WTC11 (cell line): ENCODE measurements at regions of chr10 and their contacts with region 1.

Region 1: GRCh38 chr10:117216611-117217195 is 19.4 kb downstream of the KCNK18 start:
- DNase-seq: peak; percentile 83
- ATAC-seq: peak; percentile 52
- H3K4me3 Mint-ChIP-seq: peak overlapping the region; percentile 76
- H3K27ac Mint-ChIP-seq: no peak overlapping the region
- H3K4me1 Mint-ChIP-seq: peaks cover 17% of the 10 kb centered on the region
- H3K27me3 Mint-ChIP-seq: peaks cover 72% of the 10 kb centered on the region
- CTCF ChIP-seq: peak; percentile 99

Region 2: GRCh38 chr10:117186832-117187615 is 29.7 kb before region 1 on chr10:
- CTCF ChIA-PET with region 1: interaction called, 12 read pairs
- POLR2A ChIA-PET with region 1: no interaction called
- DNase-seq: no peak
- ATAC-seq: peak; percentile 69
- H3K4me3 Mint-ChIP-seq: no peak overlapping the region
- H3K27ac Mint-ChIP-seq: no peak overlapping the region
- H3K4me1 Mint-ChIP-seq: peaks cover 5% of the 10 kb centered on the region
- H3K27me3 Mint-ChIP-seq: peaks cover 25% of the 10 kb centered on the region
- CTCF ChIP-seq: no peak

Region 3: DNA sequence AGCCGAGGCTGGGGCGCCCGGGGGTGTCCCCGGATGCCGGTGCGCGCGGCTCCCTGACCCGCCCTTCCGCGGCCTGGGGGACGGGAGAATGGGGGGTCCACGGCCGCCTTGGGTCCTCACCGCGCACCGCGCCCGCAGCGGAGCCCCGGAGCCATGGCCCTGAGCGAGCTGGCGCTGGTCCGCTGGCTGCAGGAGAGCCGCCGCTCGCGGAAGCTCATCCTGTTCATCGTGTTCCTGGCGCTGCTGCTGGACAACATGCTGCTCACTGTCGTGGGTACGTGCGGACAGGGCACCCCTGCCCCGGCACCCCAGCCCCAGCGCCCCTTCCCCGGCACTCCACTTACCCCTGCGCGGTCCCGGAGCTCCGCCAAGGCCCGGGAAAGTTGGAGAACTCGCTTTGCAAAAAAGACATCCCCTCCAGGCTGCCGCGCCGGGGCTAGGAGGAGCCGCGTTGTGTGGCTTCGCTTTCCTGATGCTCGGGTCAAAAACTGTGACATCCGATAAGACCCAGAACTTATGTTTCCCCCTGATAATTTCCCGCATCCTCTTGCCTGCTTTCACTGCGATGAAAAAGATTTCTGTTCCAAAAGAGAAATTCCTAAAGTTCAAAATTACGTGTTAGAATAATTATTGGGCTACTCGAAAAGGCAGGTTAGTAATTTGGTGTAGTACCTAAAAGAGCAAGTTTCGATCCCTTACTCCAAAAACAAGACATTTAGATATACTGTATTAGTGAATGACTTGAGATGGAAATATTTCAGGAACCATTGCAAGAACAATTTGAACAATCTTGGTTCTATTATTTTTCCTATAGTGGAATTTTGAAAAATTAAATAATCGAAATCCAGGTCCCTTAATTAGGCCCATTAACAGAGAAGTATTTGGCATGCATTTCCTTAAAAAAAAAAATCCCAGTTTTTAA is 25.1 kb after region 1 on chr10:
- CTCF ChIA-PET with region 1: interaction called, 56 read pairs
- POLR2A ChIA-PET with region 1: no interaction called
- DNase-seq: peak; percentile 47
- ATAC-seq: peak; percentile 58
- H3K4me3 Mint-ChIP-seq: peak overlapping the region; percentile 68
- H3K27ac Mint-ChIP-seq: no peak overlapping the region
- H3K4me1 Mint-ChIP-seq: peaks cover 7% of the 10 kb centered on the region
- H3K27me3 Mint-ChIP-seq: peaks cover 35% of the 10 kb centered on the region
- CTCF ChIP-seq: no peak

Region 4: DNA sequence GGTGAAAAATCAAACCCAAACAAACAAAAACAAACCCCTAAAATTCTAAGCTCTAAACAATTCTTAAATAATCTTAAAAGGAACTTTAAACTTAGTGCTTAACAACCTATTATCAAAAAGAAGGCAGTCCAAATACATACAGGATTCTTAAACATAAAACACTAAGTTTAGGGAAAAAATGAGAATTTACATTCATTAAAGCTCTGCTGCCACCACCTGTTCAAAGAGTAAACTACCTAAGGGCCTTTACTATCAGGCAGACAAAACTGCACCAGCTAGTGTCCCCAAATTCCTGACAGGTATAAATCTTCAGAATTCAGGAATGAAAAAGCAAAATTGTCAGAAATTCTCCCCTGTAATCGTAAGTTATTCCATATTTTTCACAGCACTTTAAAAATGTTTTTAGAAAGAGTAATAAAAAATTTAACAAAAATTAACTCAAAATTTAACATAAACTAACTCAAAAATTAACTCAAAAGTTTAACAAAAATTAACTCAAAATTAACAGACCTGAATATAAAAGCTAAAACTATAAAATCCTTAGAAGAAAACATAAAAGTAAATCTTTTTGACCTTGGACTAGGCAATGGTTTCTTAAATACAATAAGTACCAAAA is 103.5 kb after region 1 on chr10:
- CTCF ChIA-PET with region 1: interaction called, 119 read pairs
- POLR2A ChIA-PET with region 1: interaction called, 3 read pairs
- DNase-seq: no peak
- ATAC-seq: peak; percentile 69
- H3K4me3 Mint-ChIP-seq: no peak overlapping the region
- H3K27ac Mint-ChIP-seq: no peak overlapping the region
- H3K4me1 Mint-ChIP-seq: peaks cover 34% of the 10 kb centered on the region
- H3K27me3 Mint-ChIP-seq: no peaks in the 10 kb centered on the region
- CTCF ChIP-seq: 0 out of 2 replicates have a peak, but pooled peaks have one; percentile 29

Region 5: DNA sequence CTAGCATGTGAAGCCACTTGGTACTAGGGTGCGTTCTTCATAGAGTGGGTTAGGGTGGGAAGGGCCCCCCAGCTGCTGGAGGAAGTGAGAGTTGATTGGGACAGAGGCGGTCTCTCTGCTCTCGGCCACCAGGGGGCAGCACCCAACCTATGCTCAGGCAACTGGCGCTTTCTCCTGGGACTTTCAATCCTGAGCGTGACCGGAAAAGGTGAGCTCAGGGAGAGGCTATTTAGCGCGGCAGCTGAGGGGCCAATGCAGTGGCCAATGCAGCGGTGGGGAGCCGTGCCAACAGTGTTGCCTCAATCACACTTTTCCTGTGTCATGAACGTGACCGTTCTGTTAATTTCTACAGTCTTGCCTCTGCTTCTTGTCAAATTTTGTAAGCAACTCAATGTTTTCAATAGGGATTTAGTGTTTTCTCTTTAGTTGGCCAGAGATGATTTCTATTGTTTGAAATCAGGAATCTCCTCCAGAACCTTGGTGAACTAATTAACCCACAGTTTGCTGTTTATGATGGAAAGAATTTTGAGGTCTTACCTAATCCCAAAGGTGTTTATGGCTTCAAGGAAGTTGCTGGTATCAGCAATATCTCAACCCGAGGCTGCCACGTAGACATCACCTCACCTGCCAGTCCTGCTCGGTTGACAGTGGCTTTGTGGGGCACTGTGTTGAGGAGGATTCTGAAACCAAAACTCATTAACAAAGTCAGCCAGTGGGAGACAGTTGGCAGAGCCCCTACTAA is 226.4 kb after region 1 on chr10:
- CTCF ChIA-PET with region 1: interaction called, 72 read pairs
- POLR2A ChIA-PET with region 1: interaction called, 3 read pairs
- DNase-seq: peak; percentile 91
- ATAC-seq: peak; percentile 96
- H3K4me3 Mint-ChIP-seq: no peak overlapping the region
- H3K27ac Mint-ChIP-seq: no peak overlapping the region
- H3K4me1 Mint-ChIP-seq: no peaks in the 10 kb centered on the region; the same call in 1 of the 2 replicates
- H3K27me3 Mint-ChIP-seq: peaks cover 30% of the 10 kb centered on the region
- CTCF ChIP-seq: peak; percentile 98

Region 6: DNA sequence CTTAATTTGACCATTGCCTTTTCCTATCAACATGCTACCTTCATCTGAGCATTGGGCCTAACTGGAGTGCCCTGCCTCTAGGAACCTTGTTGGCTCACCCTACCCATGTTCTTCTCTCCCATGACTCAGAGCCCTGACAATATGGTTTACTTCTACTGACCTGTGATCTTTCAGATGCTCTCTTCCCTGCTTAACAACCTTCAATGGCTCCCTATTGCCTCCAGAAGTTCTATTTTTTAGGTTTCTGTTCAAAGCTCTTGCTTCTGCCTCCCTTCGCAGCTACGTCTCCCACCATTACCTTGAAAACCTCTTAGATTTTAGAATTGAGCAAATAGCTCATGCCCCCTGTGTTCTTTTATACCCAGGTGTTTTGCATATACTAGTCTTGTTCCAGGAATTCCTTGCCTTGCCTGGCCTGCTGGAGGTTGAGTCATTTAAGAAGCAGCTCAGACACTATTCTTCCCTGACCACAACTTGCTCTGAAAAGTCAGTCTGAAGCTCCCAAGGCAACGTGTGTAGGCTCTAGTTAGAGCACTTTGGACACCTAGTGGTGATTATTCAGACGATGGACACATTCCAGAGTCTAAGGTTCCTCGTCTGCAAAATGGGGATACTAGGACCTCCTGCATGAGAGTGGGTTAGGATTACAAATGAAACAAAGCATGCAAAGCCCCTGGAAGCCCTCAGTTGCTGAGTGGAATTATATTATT is 261.4 kb after region 1 on chr10:
- CTCF ChIA-PET with region 1: interaction called, 14 read pairs
- POLR2A ChIA-PET with region 1: no interaction called
- DNase-seq: no peak
- ATAC-seq: no peak
- H3K4me3 Mint-ChIP-seq: no peak overlapping the region
- H3K27ac Mint-ChIP-seq: no peak overlapping the region
- H3K4me1 Mint-ChIP-seq: no peaks in the 10 kb centered on the region; the same call in 1 of the 2 replicates
- H3K27me3 Mint-ChIP-seq: peaks cover 22% of the 10 kb centered on the region
- CTCF ChIP-seq: no peak

Region 7: GRCh38 chr10:117545141-117546019 is 328.7 kb after region 1 on chr10:
- CTCF ChIA-PET with region 1: no interaction called
- POLR2A ChIA-PET with region 1: no interaction called
- DNase-seq: peak; percentile 50
- ATAC-seq: peak; percentile 3; the same call in 1 of the 2 replicates
- H3K4me3 Mint-ChIP-seq: peak overlapping the region; percentile 68
- H3K27ac Mint-ChIP-seq: no peak overlapping the region
- H3K4me1 Mint-ChIP-seq: peaks cover 55% of the 10 kb centered on the region
- H3K27me3 Mint-ChIP-seq: peaks cover 99% of the 10 kb centered on the region
- CTCF ChIP-seq: no peak